ENCODE measurements at regions of chr18 and their contacts with region 1.

Region 1: GRCh38 chr18:67540559-67540958 is 24.0 kb upstream of the DSEL start:
- DNase-seq: no peak
- H3K4me3 ChIP-seq: no peak overlapping the region
- H3K27ac ChIP-seq: no peak overlapping the region
- H3K4me1 ChIP-seq: no peaks in the 10 kb centered on the region
- H3K27me3 ChIP-seq: no peaks in the 10 kb centered on the region
- CTCF ChIP-seq: no peak
- EP300 ChIP-seq: no peak
- POLR2A ChIP-seq: no peak

Region 2: GRCh38 chr18:67581178-67581577 is 40.6 kb after region 1 on chr18:
- intact Hi-C with region 1: loop called (anchors 2 kb)
- DNase-seq: no peak
- H3K4me3 ChIP-seq: no peak overlapping the region
- H3K27ac ChIP-seq: no peak overlapping the region
- H3K4me1 ChIP-seq: no peaks in the 10 kb centered on the region
- H3K27me3 ChIP-seq: no peaks in the 10 kb centered on the region
- CTCF ChIP-seq: no peak
- EP300 ChIP-seq: no peak
- POLR2A ChIP-seq: no peak

Measured in sigmoid colon (tissue), 7 donors.